ENCODE measurements at regions of chr10 and their contacts with region 1.

Region 1: DNA sequence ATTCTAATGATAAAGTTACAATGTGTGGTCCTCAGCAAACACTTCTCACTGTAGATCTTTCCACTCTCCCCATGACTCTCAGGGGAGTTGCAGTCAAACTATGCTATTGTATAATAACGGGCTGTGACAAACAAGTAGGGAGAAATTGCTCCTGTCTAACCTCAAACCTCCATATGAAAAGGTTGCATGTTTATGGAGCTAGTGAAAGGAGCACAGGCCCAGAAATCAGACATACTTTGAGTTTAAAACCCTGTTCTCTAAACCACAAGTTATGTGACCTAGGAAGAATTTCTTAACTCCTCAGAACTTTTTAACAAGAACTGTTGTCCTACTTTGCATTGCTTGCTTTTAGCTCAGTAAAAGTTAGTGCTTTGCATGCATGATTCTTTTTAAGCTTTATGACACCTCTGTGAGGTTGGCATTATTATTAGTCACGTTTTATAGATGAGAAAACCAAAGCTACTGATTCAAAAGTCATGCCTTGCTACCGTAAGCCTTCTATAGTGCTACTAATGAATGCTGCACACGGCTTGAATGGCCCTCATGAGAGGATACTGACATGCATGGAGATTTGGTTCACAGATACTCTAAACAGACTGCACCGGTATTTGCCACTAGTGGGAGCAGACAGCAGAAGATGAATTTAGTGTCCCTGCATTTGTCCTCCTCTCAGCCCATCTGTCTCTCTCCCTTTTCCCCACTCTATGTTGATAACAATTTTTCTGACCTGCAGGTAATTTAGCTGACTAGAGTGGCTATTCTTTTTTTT is 129.5 kb upstream of the PCGF5 start:
- DNase-seq: no peak
- ATAC-seq: no peak

Region 2: GRCh38 chr10:91220194-91220953 is 129.4 kb after region 1 on chr10 and contains the start of gene PCGF5:
- intact Hi-C with region 1: loop called in 1 of 2 experiments (anchors 10 kb)
- DNase-seq: peak; percentile 93
- ATAC-seq: peak; percentile 99 to 100
- total RNA-seq, gene PCGF5: 46.3 to 55.6 TPM

Region 3: DNA sequence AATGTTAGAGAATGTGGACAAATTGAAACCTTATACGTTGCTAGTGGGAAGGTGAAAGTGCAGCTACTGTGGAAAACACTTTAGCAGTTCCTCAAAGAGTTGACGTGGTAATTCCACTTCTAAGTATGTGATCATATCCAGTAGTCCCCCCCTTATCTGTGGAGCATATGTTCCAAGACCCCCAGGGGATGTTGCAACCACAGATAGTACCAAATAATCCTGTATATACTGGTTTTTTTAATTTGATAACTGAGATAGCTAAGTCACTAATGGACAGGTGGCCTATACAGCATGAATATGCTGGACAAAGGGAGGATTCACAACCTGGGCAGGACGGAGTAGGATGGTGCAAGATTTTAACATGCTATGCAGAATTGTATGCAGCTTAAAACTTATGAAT is 166.4 kb after region 1 on chr10:
- intact Hi-C with region 1: no loop called
- DNase-seq: no peak
- ATAC-seq: no peak